ENCODE measurements at regions of chr7 and their contacts with region 1.

Region 1: GRCh38 chr7:149422129-149422913 is 38.5 kb downstream of the ZNF777 start:
- DNase-seq: peak; percentile 28 to 74
- ATAC-seq: peak; percentile 87 to 98 (median 93)
- H3K4me3 ChIP-seq: peak overlapping the region in 9 of 10 donors; percentile 37 to 62 (median 56)
- H3K27ac ChIP-seq: peak overlapping the region in 8 of 10 donors; percentile 25 to 78 (median 34)
- H3K4me1 ChIP-seq: peaks cover 0 to 19% (median 12%) of the 10 kb centered on the region in 9 donors
- H3K27me3 ChIP-seq: peaks cover 0 to 9% (median 0%) of the 10 kb centered on the region in 7 donors
- CTCF ChIP-seq: peak; percentile 23 to 78 (median 58)

Region 2: GRCh38 chr7:149261829-149262617 is 160.3 kb before region 1 on chr7 and contains the start of gene ZNF783:
- intact Hi-C with region 1: loop called in 2 of 10 experiments (anchors 5 to 10 kb)
- DNase-seq: peak; percentile 82 to 90
- ATAC-seq: peak; percentile 95 to 97 (median 96)
- H3K4me3 ChIP-seq: peak within 1 kb of the TSS; percentile 7 to 64 (median 60)
- H3K27ac ChIP-seq: peak within 1 kb of the TSS; percentile 64 to 97 (median 90)
- H3K4me1 ChIP-seq: peaks cover 0 to 28% (median 16%) of the 10 kb centered on the region in 9 donors
- H3K27me3 ChIP-seq: no peaks in the 10 kb centered on the region
- CTCF ChIP-seq: peak; percentile 65 to 95 (median 86)
- total RNA-seq, gene ZNF783: 2.6 to 6.0 (median 3.3) TPM

Region 3: DNA sequence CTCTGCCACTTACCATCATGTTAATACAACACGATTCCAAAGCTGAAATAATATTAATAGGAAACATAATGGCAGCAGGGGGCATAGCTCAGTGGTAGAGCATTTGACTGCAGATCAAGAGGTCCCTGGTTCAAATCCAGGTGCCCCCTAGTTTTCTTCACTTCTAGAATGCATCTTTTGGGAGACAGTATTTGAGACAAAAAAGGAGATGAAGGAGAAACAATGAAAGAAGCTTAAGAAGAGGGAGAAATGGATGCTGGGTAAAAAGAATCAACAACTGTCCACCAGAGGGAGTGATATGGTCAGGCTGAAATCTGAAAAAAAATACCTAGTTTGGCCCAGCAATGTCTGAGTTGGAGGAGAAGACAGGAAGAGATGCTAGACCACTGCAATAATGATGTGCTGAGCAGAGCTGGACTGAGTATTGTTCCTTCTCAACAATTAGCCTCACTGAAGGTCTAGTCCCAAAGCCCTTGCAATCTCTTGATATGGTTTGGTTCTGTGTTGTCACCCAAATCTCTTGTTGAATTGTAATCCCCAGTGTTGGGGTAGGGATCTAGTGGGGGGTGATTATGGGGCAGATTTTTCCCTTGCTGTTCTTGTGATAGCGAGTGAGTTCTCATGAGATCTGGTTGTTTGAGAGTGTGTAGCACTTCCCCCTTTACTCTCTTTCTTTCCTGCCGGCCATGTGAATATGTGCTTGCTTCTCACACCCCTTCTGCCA is 112.0 kb before region 1 on chr7:
- intact Hi-C with region 1: loop called in 2 of 10 experiments (anchors 10 kb)
- DNase-seq: no peak
- ATAC-seq: peak in 2 of 8 donors; percentile 38 to 45
- H3K4me3 ChIP-seq: no peak overlapping the region
- H3K27ac ChIP-seq: no peak overlapping the region
- H3K4me1 ChIP-seq: no peaks in the 10 kb centered on the region
- H3K27me3 ChIP-seq: no peaks in the 10 kb centered on the region
- CTCF ChIP-seq: peak in 7 of 9 donors; percentile 37 to 61 (median 54)

Region 4: GRCh38 chr7:149497456-149498261 is 75.3 kb after region 1 on chr7 and contains the start of gene ZNF746:
- intact Hi-C with region 1: loop called in 3 of 10 experiments (anchors 5 to 10 kb)
- DNase-seq: peak; percentile 64 to 87
- ATAC-seq: peak; percentile 78 to 93 (median 89)
- H3K4me3 ChIP-seq: peak within 1 kb of the TSS; percentile 59 to 94 (median 70)
- H3K27ac ChIP-seq: peak within 1 kb of the TSS; percentile 64 to 93 (median 86)
- H3K4me1 ChIP-seq: peaks cover 5 to 27% (median 15%) of the 10 kb centered on the region in 9 donors
- H3K27me3 ChIP-seq: no peaks in the 10 kb centered on the region
- CTCF ChIP-seq: peak; percentile 32 to 85 (median 62)
- total RNA-seq, gene ZNF746: 6.2 to 10.5 (median 8.5) TPM